Activated CD4-positive, alpha-beta memory T cell treated with anti-CD3 and anti-CD28 coated beads for 36 hours (primary cell): ENCODE measurements at regions of chr6 and their contacts with region 1.

Region 1: GRCh38 chr6:112087136-112087911 is at the starts of genes FAM229B and TUBE1:
- DNase-seq: peak; percentile 94
- H3K4me3 Mint-ChIP-seq: no peak within 1 kb of the TSS
- H3K27ac Mint-ChIP-seq: no peak within 1 kb of the TSS
- H3K4me1 Mint-ChIP-seq: peaks cover 9% of the 10 kb centered on the region
- H3K27me3 Mint-ChIP-seq: peaks cover 11% of the 10 kb centered on the region
- total RNA-seq, gene FAM229B: 6.7 to 7.3 TPM
- total RNA-seq, gene TUBE1: 37.2 to 39.2 TPM

Region 2: DNA sequence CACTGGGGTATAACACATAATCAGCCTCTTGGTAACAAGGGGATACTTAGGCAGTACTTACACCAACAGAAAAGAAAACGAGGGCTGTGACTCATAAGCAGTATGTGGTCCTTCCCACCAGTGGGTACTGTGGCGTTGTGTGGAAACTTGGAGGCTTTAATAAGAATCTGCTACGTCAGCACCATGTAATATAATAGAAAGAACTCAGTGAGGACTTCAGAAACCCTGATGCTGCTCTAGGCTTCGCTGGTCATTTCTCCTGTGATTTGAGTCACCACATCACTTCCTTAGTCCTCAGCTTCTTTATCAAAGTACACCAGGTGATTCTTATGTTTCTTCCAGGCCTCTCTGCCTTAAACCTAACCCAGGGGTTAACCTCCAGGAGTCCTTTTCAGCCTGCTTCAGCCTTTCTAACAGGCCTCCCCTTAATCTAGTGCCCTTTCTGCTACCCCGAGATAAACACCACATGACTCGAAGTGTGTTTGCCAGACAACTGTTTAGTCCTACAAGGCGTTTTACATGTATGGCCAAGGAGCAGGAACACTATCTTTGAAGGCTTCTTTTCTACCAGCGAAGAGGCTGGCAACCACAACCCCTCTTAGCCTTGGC is 282.6 kb before region 1 on chr6:
- CTCF ChIA-PET with region 1: no interaction called
- POLR2A ChIA-PET with region 1: no interaction called
- intact Hi-C with region 1: no loop called
- DNase-seq: peak; percentile 86
- H3K4me3 Mint-ChIP-seq: peak overlapping the region; percentile 59
- H3K27ac Mint-ChIP-seq: peak overlapping the region; percentile 91
- H3K4me1 Mint-ChIP-seq: peaks cover 94% of the 10 kb centered on the region
- H3K27me3 Mint-ChIP-seq: no peaks in the 10 kb centered on the region

Region 3: GRCh38 chr6:111873178-111874024 is 213.9 kb before region 1 on chr6 and contains the start of gene FYN:
- CTCF ChIA-PET with region 1: no interaction called
- POLR2A ChIA-PET with region 1: no interaction called
- intact Hi-C with region 1: loop called (anchors 1 kb)
- DNase-seq: peak; percentile 99
- H3K4me3 Mint-ChIP-seq: peak within 1 kb of the TSS; percentile 98
- H3K27ac Mint-ChIP-seq: peak within 1 kb of the TSS; percentile 96
- H3K4me1 Mint-ChIP-seq: peaks cover 30% of the 10 kb centered on the region
- H3K27me3 Mint-ChIP-seq: no peaks in the 10 kb centered on the region
- total RNA-seq, gene FYN: 353 to 365 TPM

Region 4: DNA sequence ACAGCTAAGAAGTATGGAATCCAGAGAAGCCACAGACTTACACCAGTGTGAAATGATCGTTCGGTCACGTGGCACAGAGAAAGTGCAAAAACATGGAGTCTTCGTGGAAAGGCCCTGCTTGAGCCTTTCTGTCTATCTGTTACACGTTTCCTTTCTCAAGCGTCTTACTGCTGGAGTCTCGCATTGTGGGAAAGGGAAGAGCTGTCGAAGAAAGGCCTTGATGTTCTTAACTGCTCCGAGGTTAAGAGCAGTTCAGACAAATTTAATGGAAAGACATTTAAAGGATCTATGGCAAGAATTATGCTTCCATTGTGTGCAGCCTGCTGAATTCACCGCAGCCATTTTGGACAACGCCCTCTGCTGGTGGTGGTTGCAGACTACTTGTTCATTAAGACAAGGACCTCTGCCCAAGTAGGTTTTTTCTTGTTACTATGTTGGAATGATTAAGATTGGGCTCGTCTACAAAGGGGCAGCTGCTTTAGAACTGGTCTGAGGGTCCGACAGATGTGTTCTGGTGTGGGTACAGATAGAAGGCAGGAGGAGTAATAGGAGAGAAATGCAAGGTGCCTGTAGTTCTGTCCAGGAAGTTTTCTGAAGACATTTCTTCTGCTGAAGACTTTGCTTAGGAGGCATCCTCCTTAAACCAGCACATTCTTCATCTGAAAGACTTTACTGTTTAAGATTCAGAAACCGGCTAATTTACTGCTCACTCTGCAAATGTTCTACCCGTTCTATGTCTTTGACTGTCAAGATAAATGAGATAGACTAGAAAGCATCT is 58.1 kb before region 1 on chr6:
- CTCF ChIA-PET with region 1: no interaction called
- POLR2A ChIA-PET with region 1: no interaction called
- intact Hi-C with region 1: no loop called
- DNase-seq: peak; percentile 86
- H3K4me3 Mint-ChIP-seq: no peak overlapping the region
- H3K27ac Mint-ChIP-seq: peak overlapping the region; percentile 89
- H3K4me1 Mint-ChIP-seq: peaks cover 70% of the 10 kb centered on the region
- H3K27me3 Mint-ChIP-seq: no peaks in the 10 kb centered on the region

Region 5: GRCh38 chr6:112049026-112049799 is 38.1 kb before region 1 on chr6:
- CTCF ChIA-PET with region 1: interaction called, 12 read pairs
- POLR2A ChIA-PET with region 1: interaction called, 3 read pairs
- intact Hi-C with region 1: no loop called
- DNase-seq: no peak
- H3K4me3 Mint-ChIP-seq: no peak overlapping the region
- H3K27ac Mint-ChIP-seq: no peak overlapping the region
- H3K4me1 Mint-ChIP-seq: peaks cover 11% of the 10 kb centered on the region
- H3K27me3 Mint-ChIP-seq: no peaks in the 10 kb centered on the region

Region 6: DNA sequence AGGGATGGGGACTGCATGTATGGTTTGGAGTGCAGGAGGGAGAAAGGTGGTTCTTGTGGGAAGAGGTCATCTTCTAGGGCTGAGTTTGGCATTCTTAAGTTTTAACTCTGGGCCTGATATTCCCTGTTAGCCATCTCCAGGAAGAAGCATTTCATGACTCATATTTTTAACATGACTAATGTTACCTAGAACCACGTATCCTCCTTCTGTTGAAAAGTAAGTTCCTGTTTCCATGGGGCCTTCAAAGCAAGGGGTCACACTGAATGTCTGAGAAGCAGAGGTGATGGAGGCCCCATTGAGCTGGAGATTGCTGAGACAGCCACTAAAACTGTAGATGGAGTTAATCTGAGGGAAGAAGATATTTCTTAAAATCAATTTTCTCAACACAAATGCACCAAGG is 30.2 kb after region 1 on chr6:
- CTCF ChIA-PET with region 1: no interaction called
- POLR2A ChIA-PET with region 1: no interaction called
- intact Hi-C with region 1: loop called (anchors 2 kb)
- DNase-seq: peak; percentile 28
- H3K4me3 Mint-ChIP-seq: no peak overlapping the region
- H3K27ac Mint-ChIP-seq: peak overlapping the region; percentile 23
- H3K4me1 Mint-ChIP-seq: peaks cover 14% of the 10 kb centered on the region
- H3K27me3 Mint-ChIP-seq: peaks cover 7% of the 10 kb centered on the region

Region 7: GRCh38 chr6:112163295-112164257 is 76.3 kb after region 1 on chr6:
- CTCF ChIA-PET with region 1: interaction called, 133 read pairs
- POLR2A ChIA-PET with region 1: interaction called, 9 read pairs
- intact Hi-C with region 1: loop called (anchors 1 kb)
- DNase-seq: peak; percentile 88
- H3K4me3 Mint-ChIP-seq: peak overlapping the region; percentile 36
- H3K27ac Mint-ChIP-seq: no peak overlapping the region
- H3K4me1 Mint-ChIP-seq: peaks cover 16% of the 10 kb centered on the region
- H3K27me3 Mint-ChIP-seq: peaks cover 43% of the 10 kb centered on the region

Region 8: DNA sequence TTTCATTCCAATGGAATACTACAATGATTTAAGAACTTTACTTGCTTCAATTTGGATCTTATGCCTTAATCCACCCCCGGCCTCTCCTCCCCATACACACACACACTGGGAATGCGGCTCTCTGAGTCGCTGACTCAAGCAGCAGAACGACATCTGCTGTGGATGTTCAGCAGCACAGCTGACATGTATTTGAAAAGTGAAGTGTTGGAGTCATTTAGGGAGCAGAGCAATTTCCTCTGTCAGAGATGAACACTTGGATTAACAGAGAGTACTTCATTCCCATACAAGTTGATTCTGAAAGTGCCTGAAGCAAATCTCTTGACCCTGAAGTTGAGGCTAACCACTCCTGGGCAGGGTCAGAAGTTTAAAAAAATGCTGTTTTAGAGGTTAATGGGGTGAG is 194.9 kb after region 1 on chr6:
- CTCF ChIA-PET with region 1: interaction called, 5 read pairs
- POLR2A ChIA-PET with region 1: no interaction called
- intact Hi-C with region 1: loop called (anchors 10 kb)
- DNase-seq: no peak
- H3K4me3 Mint-ChIP-seq: no peak overlapping the region
- H3K27ac Mint-ChIP-seq: no peak overlapping the region
- H3K4me1 Mint-ChIP-seq: peaks cover 20% of the 10 kb centered on the region
- H3K27me3 Mint-ChIP-seq: peaks cover 34% of the 10 kb centered on the region

Region 9: DNA sequence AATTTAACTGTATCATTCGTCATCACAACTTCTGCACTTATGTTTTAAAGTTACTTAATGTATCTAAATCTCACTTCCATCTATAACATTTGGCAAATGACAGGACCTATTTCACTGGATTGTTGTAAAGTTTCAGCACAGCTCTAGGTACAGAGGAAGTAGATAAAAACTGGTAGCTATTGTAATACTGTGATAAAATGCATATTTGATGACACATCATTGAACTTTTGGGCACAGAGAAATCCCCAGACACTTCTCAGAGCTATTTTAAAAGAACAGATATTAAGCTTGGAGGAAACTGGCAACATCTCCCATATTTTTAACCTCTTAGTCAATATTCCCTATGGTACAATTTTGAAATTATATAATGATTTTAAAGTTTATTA is 398.5 kb after region 1 on chr6:
- CTCF ChIA-PET with region 1: no interaction called
- POLR2A ChIA-PET with region 1: no interaction called
- intact Hi-C with region 1: no loop called
- DNase-seq: no peak
- H3K4me3 Mint-ChIP-seq: no peak overlapping the region
- H3K27ac Mint-ChIP-seq: no peak overlapping the region
- H3K4me1 Mint-ChIP-seq: no peaks in the 10 kb centered on the region
- H3K27me3 Mint-ChIP-seq: peaks cover 5% of the 10 kb centered on the region